Activated CD4-positive, alpha-beta T cell treated with anti-CD3 and anti-CD28 coated beads for 36 hours (primary cell): ENCODE measurements at regions of chr3 and their contacts with region 1.

Region 1: DNA sequence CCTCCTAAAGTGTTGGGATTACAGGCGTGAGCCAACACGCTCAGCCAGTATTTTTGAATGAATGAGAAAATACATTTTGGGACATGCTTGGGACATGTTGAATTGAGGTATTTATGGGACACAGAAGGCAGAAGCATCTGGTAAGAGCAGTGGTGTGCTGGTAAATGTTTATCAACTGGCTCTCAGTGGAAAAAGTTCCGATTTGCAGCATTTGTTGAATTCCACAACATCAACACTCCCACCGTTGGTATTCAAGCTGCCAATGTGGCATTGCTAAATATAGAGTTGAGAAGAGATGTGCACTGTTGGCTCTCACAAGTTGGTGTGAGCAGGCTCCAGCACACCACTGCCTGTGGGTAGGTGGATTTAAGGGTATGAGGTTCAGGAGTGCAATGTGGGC is 35.8 kb upstream of the LRRFIP2 start:
- DNase-seq: no peak
- ATAC-seq: no peak
- H3K4me3 Mint-ChIP-seq: no peak overlapping the region
- H3K27ac Mint-ChIP-seq: no peak overlapping the region
- H3K4me1 Mint-ChIP-seq: peaks cover 2% of the 10 kb centered on the region
- H3K27me3 Mint-ChIP-seq: no peaks in the 10 kb centered on the region

Region 2: DNA sequence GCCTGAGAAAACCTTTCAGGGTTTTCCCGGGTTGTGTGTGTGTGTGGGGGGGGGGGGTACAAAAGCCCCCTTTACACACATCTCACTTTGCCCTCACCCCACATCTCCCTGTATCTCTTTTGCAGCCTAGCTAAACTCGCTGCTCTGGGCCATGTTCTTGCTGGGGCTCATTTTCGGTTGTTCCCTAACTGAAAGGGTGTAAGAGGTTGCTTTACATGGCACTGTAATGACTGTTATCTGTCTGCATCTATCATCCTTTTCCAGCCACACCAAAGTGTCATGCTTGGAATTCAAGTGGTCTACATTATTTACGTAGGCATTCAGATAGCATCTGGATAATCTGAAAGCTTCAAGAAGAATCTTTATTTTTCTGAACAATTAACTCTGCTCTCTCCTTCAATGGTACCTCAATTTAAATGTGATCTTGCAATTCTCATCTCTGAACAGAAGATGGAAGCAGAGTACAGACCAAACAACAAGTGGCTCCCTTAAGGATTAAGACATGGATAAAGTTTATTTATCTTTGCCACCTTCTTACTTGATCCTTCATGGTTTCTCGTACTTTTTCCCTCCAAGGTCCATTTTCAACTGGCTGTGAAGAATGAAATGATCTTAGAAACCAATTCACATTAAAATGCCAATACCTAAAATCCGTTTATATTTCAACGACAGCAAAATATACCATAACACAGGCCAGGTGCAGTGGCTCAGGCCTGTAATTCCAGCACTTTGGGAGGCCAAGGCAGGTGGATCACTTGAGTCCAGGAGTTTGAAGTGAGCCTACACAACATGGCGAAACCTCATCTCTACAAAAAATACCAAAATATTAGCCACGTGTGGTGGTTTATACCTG is 480.8 kb before region 1 on chr3:
- CTCF ChIA-PET with region 1: no interaction called
- POLR2A ChIA-PET with region 1: no interaction called
- intact Hi-C with region 1: loop called (anchors 2 to 5 kb)
- DNase-seq: no peak
- ATAC-seq: no peak
- H3K4me3 Mint-ChIP-seq: no peak overlapping the region
- H3K27ac Mint-ChIP-seq: no peak overlapping the region
- H3K4me1 Mint-ChIP-seq: no peaks in the 10 kb centered on the region
- H3K27me3 Mint-ChIP-seq: no peaks in the 10 kb centered on the region

Region 3: DNA sequence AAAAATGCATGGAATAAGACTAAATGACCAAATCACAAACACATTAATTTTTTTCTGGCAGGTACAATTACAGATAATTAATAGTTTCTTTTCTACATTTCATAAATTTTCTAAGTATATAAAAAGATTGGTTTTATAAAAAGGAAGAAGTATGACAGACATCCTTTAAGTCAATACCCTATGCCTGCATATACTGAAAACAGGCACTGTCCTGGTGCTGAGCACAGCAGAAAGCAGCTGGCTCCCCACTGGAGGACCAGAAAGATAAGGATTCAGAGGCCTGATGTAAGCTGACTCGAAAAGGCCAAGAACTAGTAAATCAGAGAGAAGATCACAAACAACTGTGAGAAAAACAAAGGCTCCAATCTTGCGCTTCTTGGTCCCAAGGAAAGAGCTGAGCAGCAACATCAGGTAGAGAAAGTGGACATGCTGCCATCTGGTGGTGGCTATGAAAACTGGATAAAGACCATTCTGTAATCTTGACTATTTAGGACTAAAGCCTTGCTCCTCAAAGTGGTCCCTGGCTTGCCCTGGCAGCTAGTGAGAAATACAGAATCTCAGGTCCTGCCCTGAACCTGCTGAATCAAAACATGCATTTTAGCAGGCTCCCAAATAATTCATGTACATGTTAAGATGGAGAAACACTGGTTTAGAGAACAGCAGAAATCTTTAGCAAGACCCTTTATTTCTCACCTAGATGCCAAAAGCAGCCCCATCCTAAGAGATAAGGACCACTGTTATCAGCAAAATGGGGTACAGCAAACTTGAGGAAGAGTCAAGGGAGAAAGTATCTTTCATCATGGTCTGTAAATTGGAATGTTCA is 341.4 kb before region 1 on chr3:
- CTCF ChIA-PET with region 1: no interaction called
- POLR2A ChIA-PET with region 1: no interaction called
- intact Hi-C with region 1: loop called in 1 of 2 experiments (anchors 5 kb)
- DNase-seq: peak; percentile 68
- ATAC-seq: peak; percentile 87
- H3K4me3 Mint-ChIP-seq: no peak overlapping the region
- H3K27ac Mint-ChIP-seq: no peak overlapping the region
- H3K4me1 Mint-ChIP-seq: peaks cover 17% of the 10 kb centered on the region
- H3K27me3 Mint-ChIP-seq: no peaks in the 10 kb centered on the region

Region 4: DNA sequence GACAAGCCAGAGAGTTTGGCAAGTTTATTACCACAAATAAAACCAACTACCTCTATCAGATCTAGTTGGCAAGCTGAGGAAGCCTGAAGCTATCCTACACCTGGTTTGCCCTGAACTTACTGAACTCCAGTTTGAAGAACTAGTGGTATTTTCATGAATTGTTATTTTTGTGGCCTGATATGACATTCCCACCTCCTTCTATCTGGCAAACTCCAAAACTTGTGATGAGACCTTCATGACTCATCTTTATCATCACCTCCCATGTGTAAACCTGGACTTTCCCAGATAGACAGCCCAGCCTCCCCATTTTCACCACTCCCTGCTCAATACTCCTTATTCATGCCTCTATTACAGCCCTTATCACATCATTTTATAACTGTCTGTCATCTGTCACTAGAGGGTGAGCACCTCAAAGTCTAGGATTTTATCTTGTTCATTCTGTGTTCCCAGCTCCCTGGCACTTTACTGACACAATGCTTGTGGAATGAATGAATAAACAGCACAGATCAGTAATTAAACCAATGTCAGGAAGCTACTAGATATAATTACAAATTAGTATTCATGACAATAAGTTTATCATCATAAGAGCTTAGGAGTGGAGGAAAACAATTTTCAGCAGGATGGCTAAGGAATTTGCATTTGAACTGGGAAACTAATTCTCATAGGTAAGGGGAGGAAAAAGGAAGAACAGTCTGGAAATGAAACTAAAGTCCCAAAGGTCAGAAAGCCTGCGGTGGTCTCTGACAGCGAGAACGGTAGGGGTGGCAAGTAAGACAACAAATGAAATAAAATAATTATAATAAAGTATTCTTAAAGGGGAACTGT is 252.2 kb before region 1 on chr3:
- CTCF ChIA-PET with region 1: no interaction called
- POLR2A ChIA-PET with region 1: no interaction called
- intact Hi-C with region 1: no loop called
- DNase-seq: no peak
- ATAC-seq: peak; percentile 21
- H3K4me3 Mint-ChIP-seq: no peak overlapping the region
- H3K27ac Mint-ChIP-seq: no peak overlapping the region
- H3K4me1 Mint-ChIP-seq: peaks cover 16% of the 10 kb centered on the region
- H3K27me3 Mint-ChIP-seq: no peaks in the 10 kb centered on the region

Region 5: DNA sequence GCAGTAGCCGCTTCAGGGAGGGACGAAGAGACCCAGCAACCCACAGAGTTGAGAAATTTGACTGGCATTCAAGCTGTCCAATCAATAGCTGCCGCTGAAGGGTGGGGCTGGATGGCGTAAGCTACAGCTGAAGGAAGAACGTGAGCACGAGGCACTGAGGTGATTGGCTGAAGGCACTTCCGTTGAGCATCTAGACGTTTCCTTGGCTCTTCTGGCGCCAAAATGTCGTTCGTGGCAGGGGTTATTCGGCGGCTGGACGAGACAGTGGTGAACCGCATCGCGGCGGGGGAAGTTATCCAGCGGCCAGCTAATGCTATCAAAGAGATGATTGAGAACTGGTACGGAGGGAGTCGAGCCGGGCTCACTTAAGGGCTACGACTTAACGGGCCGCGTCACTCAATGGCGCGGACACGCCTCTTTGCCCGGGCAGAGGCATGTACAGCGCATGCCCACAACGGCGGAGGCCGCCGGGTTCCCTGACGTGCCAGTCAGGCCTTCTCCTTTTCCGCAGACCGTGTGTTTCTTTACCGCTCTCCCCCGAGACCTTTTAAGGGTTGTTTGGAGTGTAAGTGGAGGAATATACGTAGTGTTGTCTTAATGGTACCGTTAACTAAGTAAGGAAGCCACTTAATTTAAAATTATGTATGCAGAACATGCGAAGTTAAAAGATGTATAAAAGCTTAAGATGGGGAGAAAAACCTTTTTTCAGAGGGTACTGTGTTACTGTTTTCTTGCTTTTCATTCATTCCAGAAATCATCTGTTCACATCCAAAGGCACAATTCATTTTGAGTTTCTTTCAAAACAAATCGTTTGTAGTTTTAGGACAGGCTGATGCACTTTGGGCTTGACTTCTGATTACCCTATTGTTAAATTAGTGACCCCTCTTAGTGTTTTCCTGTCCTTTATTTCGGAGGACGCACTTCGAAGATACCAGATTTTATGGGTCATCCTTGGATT is 216.6 kb before region 1 on chr3 and contains the start of gene MLH1:
- CTCF ChIA-PET with region 1: interaction called, 3 read pairs
- POLR2A ChIA-PET with region 1: no interaction called
- intact Hi-C with region 1: loop called in 1 of 2 experiments (anchors 10 kb)
- DNase-seq: peak; percentile 98
- ATAC-seq: peak; percentile 90
- H3K4me3 Mint-ChIP-seq: no peak within 1 kb of the TSS
- H3K27ac Mint-ChIP-seq: no peak within 1 kb of the TSS
- H3K4me1 Mint-ChIP-seq: peaks cover 43% of the 10 kb centered on the region
- H3K27me3 Mint-ChIP-seq: no peaks in the 10 kb centered on the region
- total RNA-seq, gene MLH1: 89.0 to 135 TPM

Region 6: GRCh38 chr3:37024092-37024491 is 186.1 kb before region 1 on chr3:
- CTCF ChIA-PET with region 1: interaction called, 6 read pairs
- POLR2A ChIA-PET with region 1: no interaction called
- intact Hi-C with region 1: loop called (anchors 1 to 2 kb)
- DNase-seq: no peak
- ATAC-seq: peak; percentile 42
- H3K4me3 Mint-ChIP-seq: no peak overlapping the region
- H3K27ac Mint-ChIP-seq: no peak overlapping the region
- H3K4me1 Mint-ChIP-seq: peaks cover 4% of the 10 kb centered on the region
- H3K27me3 Mint-ChIP-seq: no peaks in the 10 kb centered on the region

Region 7: DNA sequence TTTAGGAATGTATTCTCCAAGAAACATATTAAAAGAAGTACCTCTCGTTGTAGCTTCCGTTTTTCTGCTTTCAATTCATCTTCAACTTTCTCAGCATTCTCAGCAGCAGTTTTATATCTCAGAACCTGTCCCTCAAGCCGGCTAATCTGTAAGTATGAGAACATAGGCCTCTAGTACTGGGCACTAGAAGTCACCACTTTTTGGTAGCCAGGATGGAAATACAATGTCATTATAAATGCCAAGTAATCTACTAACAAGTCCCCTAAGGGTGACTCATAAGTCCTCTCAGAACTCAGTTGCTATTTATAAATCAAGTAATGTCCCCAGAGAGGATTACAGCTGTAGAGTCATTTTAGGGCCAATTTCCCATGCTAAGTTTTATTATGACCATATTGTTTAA is 155.9 kb before region 1 on chr3:
- CTCF ChIA-PET with region 1: no interaction called
- POLR2A ChIA-PET with region 1: no interaction called
- intact Hi-C with region 1: loop called (anchors 1 to 10 kb)
- DNase-seq: no peak
- ATAC-seq: peak; percentile 92
- H3K4me3 Mint-ChIP-seq: no peak overlapping the region
- H3K27ac Mint-ChIP-seq: peak overlapping the region; percentile 77
- H3K4me1 Mint-ChIP-seq: peaks cover 14% of the 10 kb centered on the region
- H3K27me3 Mint-ChIP-seq: no peaks in the 10 kb centered on the region

Region 8: GRCh38 chr3:37174532-37175126 is 35.6 kb before region 1 on chr3 and contains the start of gene LRRFIP2:
- CTCF ChIA-PET with region 1: interaction called, 3 read pairs
- POLR2A ChIA-PET with region 1: no interaction called
- intact Hi-C with region 1: loop called in 1 of 2 experiments (anchors 1 kb)
- DNase-seq: peak; percentile 42
- ATAC-seq: peak; percentile 66
- H3K4me3 Mint-ChIP-seq: peak within 1 kb of the TSS; percentile 85
- H3K27ac Mint-ChIP-seq: peak within 1 kb of the TSS; percentile 82
- H3K4me1 Mint-ChIP-seq: peaks cover 48% of the 10 kb centered on the region
- H3K27me3 Mint-ChIP-seq: no peaks in the 10 kb centered on the region
- total RNA-seq, gene LRRFIP2: 20.6 to 25.1 TPM

Region 9: DNA sequence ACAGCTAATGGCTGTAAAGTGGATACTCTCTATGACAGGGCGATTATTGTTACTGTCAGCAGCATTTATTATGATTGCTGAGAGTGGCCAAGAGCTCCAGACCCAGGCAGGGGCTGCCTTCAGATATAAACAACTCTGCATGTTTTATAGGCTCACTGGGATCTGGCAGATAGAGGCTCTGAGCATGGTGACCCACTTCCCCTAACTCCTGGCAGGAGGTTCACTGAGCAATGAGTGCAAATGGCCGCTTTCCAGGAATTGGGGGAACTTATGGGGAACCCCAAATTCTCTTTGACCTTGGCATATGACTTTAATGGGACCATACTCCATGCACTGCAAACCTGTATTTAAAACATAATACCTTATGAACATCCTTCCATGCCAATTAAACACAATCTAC is 1380.3 kb after region 1 on chr3:
- CTCF ChIA-PET with region 1: no interaction called
- POLR2A ChIA-PET with region 1: no interaction called
- intact Hi-C with region 1: no loop called
- DNase-seq: no peak
- ATAC-seq: no peak
- H3K4me3 Mint-ChIP-seq: no peak overlapping the region
- H3K27ac Mint-ChIP-seq: no peak overlapping the region
- H3K4me1 Mint-ChIP-seq: no peaks in the 10 kb centered on the region
- H3K27me3 Mint-ChIP-seq: peaks cover 6% of the 10 kb centered on the region